ENCODE measurements at regions of chr4 and their contacts with region 1.

Region 1: DNA sequence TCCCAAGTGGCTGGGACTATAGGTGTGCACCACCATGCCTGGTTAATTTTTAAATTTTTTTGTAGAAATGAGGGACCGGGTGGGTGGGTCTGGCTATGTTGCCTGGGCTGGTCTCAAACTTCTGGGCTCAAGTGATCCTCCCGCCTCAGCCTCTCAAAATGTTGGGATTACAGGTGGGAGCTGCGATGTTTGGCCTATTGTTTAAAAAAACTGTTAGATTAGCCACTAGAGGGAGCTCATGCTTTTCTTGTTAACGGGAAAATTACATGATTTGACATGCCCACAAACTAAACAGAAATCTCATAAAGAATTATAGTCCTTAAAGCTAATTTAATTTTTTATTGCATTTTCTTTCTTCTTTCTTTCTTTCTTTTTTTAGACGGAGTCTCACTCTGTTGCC is 5.0 kb upstream of the SDAD1 start:
- DNase-seq: peak; percentile 66
- H3K4me3 Mint-ChIP-seq: no peak overlapping the region
- H3K27ac Mint-ChIP-seq: peak overlapping the region; percentile 76
- H3K4me1 Mint-ChIP-seq: peaks cover 9% of the 10 kb centered on the region
- H3K27me3 Mint-ChIP-seq: peaks cover 12% of the 10 kb centered on the region
- CTCF ChIP-seq: peak; percentile 60

Region 2: GRCh38 chr4:75904076-75904475 is 91.7 kb before region 1 on chr4:
- CTCF ChIA-PET with region 1: no interaction called
- POLR2A ChIA-PET with region 1: no interaction called
- intact Hi-C with region 1: no loop called
- DNase-seq: no peak
- H3K4me3 Mint-ChIP-seq: no peak overlapping the region
- H3K27ac Mint-ChIP-seq: no peak overlapping the region
- H3K4me1 Mint-ChIP-seq: peaks cover 6% of the 10 kb centered on the region
- H3K27me3 Mint-ChIP-seq: no peaks in the 10 kb centered on the region
- CTCF ChIP-seq: no peak

Region 3: GRCh38 chr4:76055016-76055415 is 59.3 kb after region 1 on chr4:
- CTCF ChIA-PET with region 1: interaction called, 30 read pairs
- POLR2A ChIA-PET with region 1: interaction called, 3 read pairs
- intact Hi-C with region 1: no loop called
- DNase-seq: no peak
- H3K4me3 Mint-ChIP-seq: no peak overlapping the region
- H3K27ac Mint-ChIP-seq: no peak overlapping the region
- H3K4me1 Mint-ChIP-seq: peaks cover 21% of the 10 kb centered on the region
- H3K27me3 Mint-ChIP-seq: no peaks in the 10 kb centered on the region
- CTCF ChIP-seq: no peak

Region 4: GRCh38 chr4:76061982-76062381 is 66.3 kb after region 1 on chr4:
- CTCF ChIA-PET with region 1: interaction called, 126 read pairs
- POLR2A ChIA-PET with region 1: interaction called, 6 read pairs
- intact Hi-C with region 1: loop called (anchors 1 kb)
- DNase-seq: no peak
- H3K4me3 Mint-ChIP-seq: no peak overlapping the region
- H3K27ac Mint-ChIP-seq: no peak overlapping the region
- H3K4me1 Mint-ChIP-seq: peaks cover 26% of the 10 kb centered on the region
- H3K27me3 Mint-ChIP-seq: no peaks in the 10 kb centered on the region
- CTCF ChIP-seq: no peak

Region 5: DNA sequence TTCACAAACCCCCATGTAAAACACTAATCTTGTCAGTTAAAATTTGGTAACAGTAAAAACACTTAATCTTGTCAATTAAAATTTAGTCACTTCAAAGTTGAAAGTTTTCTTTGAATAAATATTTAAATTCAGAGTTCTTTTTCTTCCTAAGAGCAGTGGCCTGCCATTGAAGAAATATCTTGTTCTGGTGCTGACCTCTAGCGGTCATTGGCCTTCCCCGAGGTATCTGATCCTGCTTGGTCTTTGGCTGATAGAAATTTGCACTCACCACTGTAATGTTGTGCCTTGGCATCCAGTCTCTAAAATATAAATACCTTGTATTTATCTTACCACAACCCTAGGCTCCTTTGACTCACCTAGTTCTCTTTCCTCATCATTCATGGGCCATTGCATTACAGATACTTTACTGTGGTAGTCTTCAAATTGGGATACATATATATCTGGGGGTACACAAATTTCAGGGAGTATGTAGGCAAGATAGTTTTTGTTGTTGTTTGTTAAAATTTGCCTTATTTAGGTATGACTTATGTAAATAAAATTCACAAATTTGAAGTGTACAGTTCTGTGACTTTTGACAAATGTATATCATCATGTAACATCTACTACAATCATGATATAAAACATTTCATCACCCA is 72.0 kb after region 1 on chr4:
- CTCF ChIA-PET with region 1: interaction called, 126 read pairs
- POLR2A ChIA-PET with region 1: interaction called, 6 read pairs
- intact Hi-C with region 1: loop called (anchors 1 kb)
- DNase-seq: peak; percentile 83
- H3K4me3 Mint-ChIP-seq: no peak overlapping the region
- H3K27ac Mint-ChIP-seq: no peak overlapping the region
- H3K4me1 Mint-ChIP-seq: no peaks in the 10 kb centered on the region
- H3K27me3 Mint-ChIP-seq: no peaks in the 10 kb centered on the region
- CTCF ChIP-seq: peak; percentile 65

Region 6: GRCh38 chr4:76148142-76148865 is 152.6 kb after region 1 on chr4 and contains the start of gene NUP54:
- CTCF ChIA-PET with region 1: interaction called, 4 read pairs
- POLR2A ChIA-PET with region 1: interaction called, 14 read pairs
- intact Hi-C with region 1: no loop called
- DNase-seq: peak; percentile 94
- H3K4me3 Mint-ChIP-seq: peak within 1 kb of the TSS; percentile 98
- H3K27ac Mint-ChIP-seq: peak within 1 kb of the TSS; percentile 98
- H3K4me1 Mint-ChIP-seq: peaks cover 12% of the 10 kb centered on the region
- H3K27me3 Mint-ChIP-seq: no peaks in the 10 kb centered on the region
- CTCF ChIP-seq: no peak
- total RNA-seq, gene NUP54: 46.9 and 51.5 TPM in 2 replicates

Region 7: DNA sequence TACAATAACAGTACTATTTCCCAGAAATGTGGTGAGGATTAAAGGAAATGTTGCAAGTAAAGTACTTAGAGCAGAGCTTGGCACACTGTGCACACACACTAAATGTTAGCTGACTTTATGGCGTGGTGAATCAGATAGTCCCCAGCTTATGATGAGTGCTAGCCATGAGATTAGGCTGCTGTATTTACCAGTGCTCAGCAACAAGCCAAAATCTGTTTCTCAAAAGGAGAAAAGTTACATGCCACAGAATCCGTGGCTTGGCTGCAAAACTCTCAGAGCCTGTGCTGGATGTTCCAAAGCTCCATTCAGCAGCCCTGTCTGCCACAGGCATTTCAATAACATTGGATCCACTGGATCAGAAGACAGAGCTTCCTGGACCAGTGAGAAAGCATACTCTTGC is 298.0 kb after region 1 on chr4:
- CTCF ChIA-PET with region 1: no interaction called
- POLR2A ChIA-PET with region 1: no interaction called
- intact Hi-C with region 1: no loop called
- DNase-seq: no peak
- H3K4me3 Mint-ChIP-seq: no peak overlapping the region
- H3K27ac Mint-ChIP-seq: no peak overlapping the region
- H3K4me1 Mint-ChIP-seq: no peaks in the 10 kb centered on the region
- H3K27me3 Mint-ChIP-seq: no peaks in the 10 kb centered on the region
- CTCF ChIP-seq: no peak

Region 8: GRCh38 chr4:76504613-76505465 is 509.1 kb after region 1 on chr4:
- CTCF ChIA-PET with region 1: no interaction called
- POLR2A ChIA-PET with region 1: no interaction called
- intact Hi-C with region 1: loop called (anchors 5 kb)
- DNase-seq: peak; percentile 75
- H3K4me3 Mint-ChIP-seq: no peak overlapping the region
- H3K27ac Mint-ChIP-seq: no peak overlapping the region
- H3K4me1 Mint-ChIP-seq: no peaks in the 10 kb centered on the region
- H3K27me3 Mint-ChIP-seq: no peaks in the 10 kb centered on the region
- CTCF ChIP-seq: peak; percentile 70